ENCODE measurements at regions of chr12 and their contacts with region 1.

Region 1: DNA sequence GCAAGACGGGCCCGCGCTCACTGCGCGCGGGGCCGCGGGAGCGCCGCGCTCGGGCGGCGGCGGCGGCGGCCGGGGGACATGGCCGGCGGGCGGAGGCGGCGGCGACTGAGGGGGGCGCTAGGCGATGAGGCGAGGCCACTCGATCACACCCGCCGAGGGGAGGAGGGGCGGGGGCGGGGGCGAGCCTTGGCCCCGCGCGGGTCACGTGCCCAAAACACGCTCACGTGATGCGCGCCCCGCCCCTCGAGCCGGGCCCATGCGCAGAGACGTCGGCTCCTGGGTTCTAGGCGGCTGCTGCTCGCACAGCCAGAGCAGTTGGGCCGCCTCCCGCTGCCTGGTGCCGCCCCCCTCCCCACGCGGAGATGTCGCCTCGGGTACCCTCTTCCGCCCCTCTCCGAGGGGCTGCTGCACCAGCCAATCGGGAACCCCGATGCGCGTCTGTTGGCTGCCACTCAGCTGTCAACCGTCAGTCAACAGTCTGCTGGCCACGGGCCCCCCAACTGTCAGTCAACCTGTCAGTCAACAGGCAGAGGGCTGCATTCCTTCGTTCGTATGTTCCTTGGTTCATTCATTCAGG is at the start of gene SPPL3:
- DNase-seq: peak; percentile 98
- ATAC-seq: peak; percentile 79
- H3K4me3 Mint-ChIP-seq: peak within 1 kb of the TSS; percentile 100
- H3K27ac Mint-ChIP-seq: peak within 1 kb of the TSS; percentile 94
- H3K4me1 Mint-ChIP-seq: peaks cover 23% of the 10 kb centered on the region
- H3K27me3 Mint-ChIP-seq: peaks cover 1% of the 10 kb centered on the region
- total RNA-seq, gene SPPL3: 28.0 to 31.1 TPM

Region 2: DNA sequence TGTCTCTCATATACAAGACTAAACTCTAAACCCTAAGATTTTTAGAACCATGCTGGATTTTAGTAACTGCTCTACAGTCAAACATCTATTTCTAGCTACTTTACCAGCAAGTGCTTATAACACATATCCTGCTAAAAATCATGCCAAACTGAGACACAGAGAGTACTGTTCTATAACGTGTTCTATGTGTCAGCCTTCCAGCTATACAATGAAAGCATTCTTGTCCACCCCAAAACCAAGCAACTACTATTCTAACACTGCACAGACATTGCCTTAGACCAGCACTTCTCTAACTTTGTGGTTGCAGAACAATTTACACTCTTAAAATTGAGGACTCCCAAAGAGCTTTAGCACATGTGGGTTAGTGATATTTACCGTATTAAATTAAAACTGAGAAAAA is 85.9 kb before region 1 on chr12:
- POLR2A ChIA-PET with region 1: no interaction called
- DNase-seq: no peak
- ATAC-seq: no peak
- H3K4me3 Mint-ChIP-seq: no peak overlapping the region
- H3K27ac Mint-ChIP-seq: no peak overlapping the region
- H3K4me1 Mint-ChIP-seq: peaks cover 18% of the 10 kb centered on the region
- H3K27me3 Mint-ChIP-seq: no peaks in the 10 kb centered on the region

Region 3: GRCh38 chr12:120886199-120887018 is 17.9 kb before region 1 on chr12:
- POLR2A ChIA-PET with region 1: interaction called, 27 read pairs
- DNase-seq: no peak
- ATAC-seq: peak; percentile 88
- H3K4me3 Mint-ChIP-seq: peak overlapping the region; percentile 68
- H3K27ac Mint-ChIP-seq: peak overlapping the region; percentile 88
- H3K4me1 Mint-ChIP-seq: peaks cover 36% of the 10 kb centered on the region
- H3K27me3 Mint-ChIP-seq: no peaks in the 10 kb centered on the region

Region 4: GRCh38 chr12:121079736-121080272 is 175.5 kb after region 1 on chr12:
- POLR2A ChIA-PET with region 1: no interaction called
- DNase-seq: no peak
- ATAC-seq: no peak
- H3K4me3 Mint-ChIP-seq: no peak overlapping the region
- H3K27ac Mint-ChIP-seq: no peak overlapping the region
- H3K4me1 Mint-ChIP-seq: no peaks in the 10 kb centered on the region
- H3K27me3 Mint-ChIP-seq: peaks cover 16% of the 10 kb centered on the region

Measured in activated naive CD8-positive, alpha-beta T cell treated with anti-CD3 and anti-CD28 coated beads, Interleukin-2, amount 10 ng/mL, durations not matched to agents 7 days and 5 days (primary cell).